HAP-1 (cell line): ENCODE measurements at regions of chr7 and their contacts with region 1.

Region 1: GRCh38 chr7:28853834-28854749 is 104.0 kb downstream of the TRIL start:
- DNase-seq: peak; percentile 60 to 87
- H3K4me3 ChIP-seq: peak overlapping the region; percentile 34
- H3K4me1 ChIP-seq: no peaks in the 10 kb centered on the region; the same call in 1 of the 2 replicates
- H3K27me3 ChIP-seq: peaks cover 50% of the 10 kb centered on the region

Region 2: DNA sequence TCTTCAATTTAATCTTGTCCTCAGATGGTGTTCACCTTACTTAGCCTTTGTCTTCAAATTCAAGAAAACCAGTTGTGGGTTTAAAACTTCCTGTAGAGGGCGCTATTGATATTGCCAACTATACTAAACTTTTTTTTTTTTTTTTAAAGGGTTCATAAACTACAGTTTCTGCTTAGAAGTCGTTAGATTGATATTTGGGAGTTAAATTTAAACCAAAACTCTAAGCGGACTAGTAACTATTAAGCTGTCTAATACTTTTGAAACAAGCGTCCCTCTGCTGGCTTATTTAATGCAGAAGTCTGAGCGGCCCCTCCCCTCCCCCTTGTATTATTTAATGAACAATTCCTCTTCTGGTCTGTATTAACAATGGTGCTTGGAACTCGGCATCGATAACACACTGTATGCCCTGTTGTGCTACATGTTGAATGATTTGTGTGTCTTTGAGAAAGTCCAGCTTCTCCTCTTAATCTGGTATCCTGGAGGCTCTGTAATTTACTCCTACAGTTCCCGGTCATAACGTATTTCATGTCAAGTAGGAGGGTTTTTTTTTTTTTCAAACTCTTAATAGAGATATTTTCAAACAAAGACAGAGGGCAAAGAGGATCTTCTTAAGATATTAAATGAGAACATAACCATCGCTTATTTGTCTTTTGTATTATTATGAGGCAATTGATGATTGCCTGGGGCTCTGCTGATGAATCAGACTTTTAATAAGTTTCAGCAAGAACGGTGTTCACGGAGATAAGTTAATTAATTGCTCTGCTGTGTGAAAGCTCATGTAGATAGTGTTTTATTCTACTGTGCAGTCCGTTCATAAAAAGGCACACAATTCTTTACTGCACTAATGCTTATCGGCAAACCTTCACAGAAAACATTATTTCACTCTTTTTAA is 464.3 kb before region 1 on chr7:
- in situ Hi-C with region 1: loop called (anchors 25 kb)
- DNase-seq: peak; percentile 28 to 55
- H3K4me3 ChIP-seq: no peak overlapping the region
- H3K4me1 ChIP-seq: no peaks in the 10 kb centered on the region; the same call in 1 of the 2 replicates
- H3K27me3 ChIP-seq: peaks cover 34% of the 10 kb centered on the region